B cell (primary cell): ENCODE measurements at regions of chr19 and their contacts with region 1.

Region 1: DNA sequence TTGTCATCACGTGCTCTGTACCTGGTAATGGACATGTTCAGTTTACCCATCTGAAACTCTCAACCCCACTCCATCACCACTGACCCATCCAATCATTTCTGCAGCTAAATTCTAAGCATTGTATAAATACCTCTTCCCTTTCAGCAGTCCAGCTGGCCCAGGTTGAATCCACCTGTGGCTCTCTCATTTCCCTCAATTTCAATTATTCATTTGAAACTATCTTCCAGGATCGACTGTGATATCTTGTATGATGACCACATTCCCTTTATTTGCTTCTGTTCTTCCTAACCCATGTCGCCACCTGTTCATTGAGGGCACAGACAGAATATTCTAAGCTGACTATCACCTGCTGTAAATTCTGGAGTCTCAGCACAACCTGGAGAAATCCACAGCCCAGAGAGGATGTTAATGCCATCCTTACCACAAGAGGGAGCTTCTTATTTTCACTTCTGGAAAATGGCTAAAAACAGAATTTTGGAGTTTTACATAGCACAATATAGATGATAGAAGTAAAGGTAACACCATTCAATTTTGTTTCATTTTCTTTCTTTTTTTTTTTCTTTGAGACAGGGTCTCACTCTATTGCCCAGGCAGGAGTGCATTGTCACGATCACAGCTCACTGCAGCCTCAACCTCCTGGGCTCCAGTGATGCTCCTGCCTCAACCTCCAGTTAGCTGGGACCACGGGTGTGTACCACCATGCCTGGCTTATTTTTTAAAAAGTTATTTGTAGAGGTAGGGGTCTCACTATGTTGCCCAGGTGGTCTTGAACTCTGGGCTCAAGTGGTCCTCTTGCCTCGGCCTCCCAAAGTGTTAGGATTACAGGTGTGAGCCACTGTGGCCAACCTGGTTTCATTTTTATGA is 38.6 kb downstream of the ZNF823 start:
- DNase-seq: peak; percentile 54
- ATAC-seq: no peak
- H3K4me3 ChIP-seq: no peak overlapping the region
- H3K4me3 Mint-ChIP-seq: no peak overlapping the region
- H3K27ac ChIP-seq: no peak overlapping the region
- H3K27ac Mint-ChIP-seq: no peak overlapping the region
- H3K4me1 ChIP-seq: peaks cover 1% of the 10 kb centered on the region in 2 donors
- H3K4me1 Mint-ChIP-seq: peaks cover under 1% of the 10 kb centered on the region
- H3K27me3 ChIP-seq: peaks cover 0 to 7% (median 3%) of the 10 kb centered on the region in 4 experiments
- H3K27me3 Mint-ChIP-seq: peaks cover 11% of the 10 kb centered on the region
- CTCF ChIP-seq: peak; percentile 83

Region 2: GRCh38 chr19:11551603-11552235 is 148.4 kb before region 1 on chr19:
- CTCF ChIA-PET with region 1: no interaction called
- POLR2A ChIA-PET with region 1: no interaction called
- intact Hi-C with region 1: no loop called
- DNase-seq: no peak
- ATAC-seq: no peak
- H3K4me3 ChIP-seq: no peak overlapping the region
- H3K4me3 Mint-ChIP-seq: no peak overlapping the region
- H3K27ac ChIP-seq: no peak overlapping the region
- H3K27ac Mint-ChIP-seq: no peak overlapping the region
- H3K4me1 ChIP-seq: peaks cover 22 to 39% of the 10 kb centered on the region in 2 donors
- H3K4me1 Mint-ChIP-seq: peaks cover 38% of the 10 kb centered on the region
- H3K27me3 ChIP-seq: no peaks in the 10 kb centered on the region
- H3K27me3 Mint-ChIP-seq: no peaks in the 10 kb centered on the region
- CTCF ChIP-seq: no peak

Region 3: DNA sequence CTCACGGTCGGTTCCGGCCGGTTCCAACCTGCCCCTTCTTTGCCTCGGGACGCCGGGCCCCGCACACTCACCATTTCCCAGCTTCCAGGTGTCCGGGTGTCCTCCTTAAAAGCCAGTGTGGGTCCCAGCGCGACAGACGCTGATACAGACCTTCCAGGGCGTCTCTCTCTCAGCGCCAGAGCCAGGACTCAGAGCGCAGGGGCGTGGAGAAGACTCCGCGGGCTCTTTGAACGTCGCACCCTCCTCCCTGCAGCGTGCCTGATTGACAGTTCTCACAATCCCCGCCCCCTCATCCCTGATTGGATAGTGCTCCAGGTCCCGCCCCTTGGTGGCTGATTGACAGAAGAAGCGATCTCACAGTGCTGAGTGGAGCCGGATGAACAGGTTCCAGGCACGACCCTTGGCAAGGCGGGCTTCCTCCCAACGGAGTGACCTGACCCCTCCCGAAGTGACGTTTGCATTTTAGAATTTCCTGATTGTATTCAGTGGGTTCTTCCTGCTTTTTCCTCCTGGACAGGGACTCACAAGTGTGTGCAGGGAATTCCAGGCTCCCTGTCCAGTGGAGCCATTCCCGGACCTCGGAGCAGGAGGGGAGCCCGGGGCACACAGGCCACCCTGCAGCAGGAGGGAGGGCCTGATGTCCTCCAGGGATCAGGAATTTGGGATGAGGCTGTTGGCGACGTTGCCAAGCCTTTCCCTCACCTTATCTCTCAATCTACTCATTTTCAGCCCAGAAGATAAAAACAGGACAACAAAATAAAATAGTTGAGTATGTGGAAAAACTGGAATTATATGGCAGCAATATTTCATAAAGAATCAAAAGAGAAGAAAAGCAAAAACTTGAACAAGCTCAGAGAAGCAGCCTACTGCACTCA is 38.8 kb after region 1 on chr19 and contains the start of gene ZNF823:
- CTCF ChIA-PET with region 1: interaction called, 7 read pairs
- POLR2A ChIA-PET with region 1: no interaction called
- intact Hi-C with region 1: loop called (anchors 2 kb)
- DNase-seq: peak; percentile 94
- ATAC-seq: peak; percentile 99
- H3K4me3 ChIP-seq: peak within 1 kb of the TSS; percentile 36 to 92 (median 83)
- H3K4me3 Mint-ChIP-seq: peak within 1 kb of the TSS; percentile 99
- H3K27ac ChIP-seq: peak within 1 kb of the TSS in 1 of 2 donors; percentile 38
- H3K27ac Mint-ChIP-seq: peak within 1 kb of the TSS; percentile 89
- H3K4me1 ChIP-seq: peaks cover 15 to 19% of the 10 kb centered on the region in 2 donors
- H3K4me1 Mint-ChIP-seq: peaks cover 26% of the 10 kb centered on the region
- H3K27me3 ChIP-seq: no peaks in the 10 kb centered on the region
- H3K27me3 Mint-ChIP-seq: peaks cover 5% of the 10 kb centered on the region
- CTCF ChIP-seq: no peak
- total RNA-seq, gene ZNF823: 4.2 and 5.1 TPM in 2 replicates